Activated CD4-positive, alpha-beta T cell treated with anti-CD3 and anti-CD28 coated beads for 36 hours (primary cell): ENCODE measurements at regions of chrX and their contacts with region 1.

Region 1: GRCh38 chrX:72620550-72621145 is 48.0 kb upstream of the HDAC8 start:
- DNase-seq: peak; percentile 70
- ATAC-seq: peak; percentile 63
- H3K4me3 Mint-ChIP-seq: peak overlapping the region; percentile 32
- H3K27ac Mint-ChIP-seq: peak overlapping the region; percentile 93
- H3K4me1 Mint-ChIP-seq: peaks cover 22% of the 10 kb centered on the region
- H3K27me3 Mint-ChIP-seq: no peaks in the 10 kb centered on the region

Region 2: GRCh38 chrX:72269671-72270251 is 350.9 kb before region 1 on chrX:
- CTCF ChIA-PET with region 1: no interaction called
- POLR2A ChIA-PET with region 1: no interaction called
- intact Hi-C with region 1: loop called in 1 of 2 experiments (anchors 5 kb)
- DNase-seq: peak; percentile 61
- ATAC-seq: peak; percentile 76
- H3K4me3 Mint-ChIP-seq: no peak overlapping the region
- H3K27ac Mint-ChIP-seq: peak overlapping the region; percentile 88
- H3K4me1 Mint-ChIP-seq: peaks cover 46% of the 10 kb centered on the region
- H3K27me3 Mint-ChIP-seq: no peaks in the 10 kb centered on the region

Region 3: GRCh38 chrX:72349190-72349589 is 271.5 kb before region 1 on chrX:
- CTCF ChIA-PET with region 1: no interaction called
- POLR2A ChIA-PET with region 1: no interaction called
- intact Hi-C with region 1: loop called in 1 of 2 experiments (anchors 5 kb)
- DNase-seq: peak; percentile 54
- ATAC-seq: peak; percentile 85
- H3K4me3 Mint-ChIP-seq: no peak overlapping the region
- H3K27ac Mint-ChIP-seq: peak overlapping the region; percentile 76
- H3K4me1 Mint-ChIP-seq: peaks cover 19% of the 10 kb centered on the region
- H3K27me3 Mint-ChIP-seq: no peaks in the 10 kb centered on the region

Region 4: GRCh38 chrX:72572248-72573157 is 48.1 kb before region 1 on chrX and contains the start of gene HDAC8:
- CTCF ChIA-PET with region 1: interaction called, 4 read pairs
- POLR2A ChIA-PET with region 1: no interaction called
- intact Hi-C with region 1: loop called (anchors 1 kb)
- DNase-seq: peak; percentile 59
- ATAC-seq: peak; percentile 90
- H3K4me3 Mint-ChIP-seq: peak within 1 kb of the TSS; percentile 97
- H3K27ac Mint-ChIP-seq: peak within 1 kb of the TSS; percentile 95
- H3K4me1 Mint-ChIP-seq: peaks cover 9% of the 10 kb centered on the region
- H3K27me3 Mint-ChIP-seq: no peaks in the 10 kb centered on the region
- total RNA-seq, gene HDAC8: 13.3 to 16.9 TPM

Region 5: DNA sequence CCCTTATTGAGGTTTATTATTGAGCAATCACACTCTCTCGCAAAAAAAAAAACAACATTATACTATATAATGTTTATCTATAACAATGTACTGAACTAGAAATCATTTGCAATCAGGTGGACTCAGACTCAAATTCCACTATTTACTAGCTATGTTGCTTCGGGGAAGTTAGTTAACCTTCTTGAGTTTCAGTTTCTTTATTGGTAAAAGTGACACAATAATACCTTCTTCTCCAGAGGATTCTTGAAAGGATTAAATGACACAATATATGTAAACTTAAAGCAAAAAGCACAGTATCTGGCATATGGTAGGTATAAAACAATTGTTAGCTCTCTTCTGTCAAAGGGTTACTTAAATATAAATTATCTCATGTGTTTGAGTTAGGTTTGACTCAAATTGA is 16.5 kb before region 1 on chrX:
- CTCF ChIA-PET with region 1: no interaction called
- POLR2A ChIA-PET with region 1: interaction called, 3 read pairs
- intact Hi-C with region 1: loop called in 1 of 2 experiments (anchors 1 kb)
- DNase-seq: no peak
- ATAC-seq: peak; percentile 39
- H3K4me3 Mint-ChIP-seq: no peak overlapping the region
- H3K27ac Mint-ChIP-seq: no peak overlapping the region
- H3K4me1 Mint-ChIP-seq: peaks cover 11% of the 10 kb centered on the region
- H3K27me3 Mint-ChIP-seq: no peaks in the 10 kb centered on the region

Region 6: DNA sequence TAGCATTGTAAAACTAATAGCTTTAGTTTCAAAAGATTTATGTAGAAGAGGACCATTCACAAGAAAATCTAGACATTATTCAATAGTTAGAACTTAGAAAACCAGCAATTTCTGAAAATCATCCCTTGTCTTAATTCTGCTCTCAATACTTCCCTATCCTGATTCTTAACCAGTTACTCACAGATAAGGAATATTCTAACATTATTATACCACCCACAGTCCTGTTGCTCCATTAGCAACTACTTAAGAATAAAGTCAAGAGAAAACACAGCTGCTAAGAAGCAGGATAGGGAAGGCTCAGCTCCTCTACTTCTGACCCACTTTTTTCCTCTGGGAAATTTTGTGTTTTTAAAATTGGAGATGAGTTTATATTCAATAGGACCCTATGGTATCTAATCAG is 45.8 kb after region 1 on chrX:
- CTCF ChIA-PET with region 1: no interaction called
- POLR2A ChIA-PET with region 1: no interaction called
- intact Hi-C with region 1: loop called in 1 of 2 experiments (anchors 5 kb)
- DNase-seq: no peak
- ATAC-seq: no peak
- H3K4me3 Mint-ChIP-seq: no peak overlapping the region
- H3K27ac Mint-ChIP-seq: no peak overlapping the region
- H3K4me1 Mint-ChIP-seq: peaks cover 7% of the 10 kb centered on the region
- H3K27me3 Mint-ChIP-seq: no peaks in the 10 kb centered on the region

Region 7: DNA sequence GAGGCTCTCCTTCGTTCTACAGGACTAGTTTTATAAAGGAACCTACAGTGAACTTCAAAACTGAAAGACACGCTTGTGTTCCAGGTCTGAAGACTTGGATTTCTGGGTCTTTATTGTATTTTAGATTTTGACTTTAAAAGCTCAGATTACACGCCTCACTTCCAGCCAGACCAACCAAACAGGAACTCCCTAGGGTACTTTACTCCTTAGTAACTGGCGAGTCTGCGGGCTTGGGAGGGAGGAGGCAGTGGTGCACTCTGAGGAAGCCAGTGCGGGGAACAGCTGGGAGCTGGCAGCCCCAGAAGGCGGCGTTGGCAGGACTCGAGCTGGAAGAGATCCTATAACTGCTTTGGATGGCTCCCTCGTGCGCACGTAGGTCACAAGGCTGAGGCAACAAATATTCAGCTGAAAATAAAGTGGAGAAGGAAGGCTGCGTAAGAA is 93.8 kb after region 1 on chrX:
- CTCF ChIA-PET with region 1: no interaction called
- POLR2A ChIA-PET with region 1: no interaction called
- intact Hi-C with region 1: loop called (anchors 1 to 5 kb)
- DNase-seq: peak; percentile 18
- ATAC-seq: no peak
- H3K4me3 Mint-ChIP-seq: peak overlapping the region; percentile 74
- H3K27ac Mint-ChIP-seq: peak overlapping the region; percentile 82
- H3K4me1 Mint-ChIP-seq: peaks cover 10% of the 10 kb centered on the region
- H3K27me3 Mint-ChIP-seq: peaks cover 3% of the 10 kb centered on the region

Region 8: GRCh38 chrX:73366696-73367095 is 746.0 kb after region 1 on chrX:
- CTCF ChIA-PET with region 1: no interaction called
- POLR2A ChIA-PET with region 1: no interaction called
- intact Hi-C with region 1: no loop called
- DNase-seq: no peak
- ATAC-seq: no peak
- H3K4me3 Mint-ChIP-seq: no peak overlapping the region
- H3K27ac Mint-ChIP-seq: no peak overlapping the region
- H3K4me1 Mint-ChIP-seq: no peaks in the 10 kb centered on the region
- H3K27me3 Mint-ChIP-seq: peaks cover 2% of the 10 kb centered on the region